MCF 10A (cell line): ENCODE measurements at regions of chr1 and their contacts with region 1.

Region 1: GRCh38 chr1:246450611-246451251 is 56.3 kb downstream of the SMYD3 start:
- DNase-seq: peak; percentile 61
- H3K4me3 Mint-ChIP-seq: no peak overlapping the region
- H3K27ac Mint-ChIP-seq: no peak overlapping the region
- H3K4me1 Mint-ChIP-seq: no peaks in the 10 kb centered on the region
- H3K27me3 Mint-ChIP-seq: no peaks in the 10 kb centered on the region
- CTCF ChIP-seq: peak; percentile 98

Region 2: GRCh38 chr1:245079021-245079609 is 1371.6 kb before region 1 on chr1:
- CTCF ChIA-PET with region 1: interaction called, 4 read pairs
- POLR2A ChIA-PET with region 1: interaction called, 3 read pairs
- intact Hi-C with region 1: loop called (anchors 5 kb)
- DNase-seq: peak; percentile 73
- H3K4me3 Mint-ChIP-seq: no peak overlapping the region
- H3K27ac Mint-ChIP-seq: no peak overlapping the region
- H3K4me1 Mint-ChIP-seq: peaks cover 4% of the 10 kb centered on the region
- H3K27me3 Mint-ChIP-seq: no peaks in the 10 kb centered on the region
- CTCF ChIP-seq: peak; percentile 97

Region 3: DNA sequence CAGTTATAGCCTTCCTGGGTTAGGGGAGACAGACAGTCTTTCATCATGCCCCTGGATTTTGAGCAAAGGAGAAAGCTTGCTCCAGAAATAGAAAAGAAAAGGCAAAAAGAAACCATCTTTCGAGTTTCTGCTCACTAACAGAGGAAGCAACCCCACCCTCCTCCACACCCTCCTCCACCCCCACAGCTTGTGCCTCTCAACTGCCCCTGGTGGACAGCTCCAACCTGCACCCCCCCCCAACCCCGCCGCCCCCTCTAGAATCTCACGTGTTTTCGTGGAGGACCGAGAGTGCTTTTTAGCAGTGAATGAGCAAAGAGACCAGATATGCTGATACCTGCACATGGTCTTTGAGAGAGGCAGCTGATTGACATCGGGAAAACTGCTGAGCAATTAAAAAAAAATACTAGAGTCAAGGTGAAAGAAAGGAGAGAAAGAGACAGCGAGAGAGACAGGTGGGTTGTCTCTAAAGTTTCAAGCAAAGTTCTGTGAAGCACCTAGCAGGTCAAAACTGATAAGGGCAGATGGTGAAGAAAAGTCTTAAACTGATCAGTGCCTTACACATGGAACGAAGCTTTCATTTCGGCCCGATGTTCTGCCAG is 937.7 kb before region 1 on chr1:
- CTCF ChIA-PET with region 1: no interaction called
- POLR2A ChIA-PET with region 1: no interaction called
- intact Hi-C with region 1: loop called (anchors 5 kb)
- DNase-seq: no peak
- H3K4me3 Mint-ChIP-seq: no peak overlapping the region
- H3K27ac Mint-ChIP-seq: no peak overlapping the region
- H3K4me1 Mint-ChIP-seq: peaks cover 9% of the 10 kb centered on the region
- H3K27me3 Mint-ChIP-seq: peaks cover 67% of the 10 kb centered on the region
- CTCF ChIP-seq: peak; percentile 6

Region 4: GRCh38 chr1:246012341-246012740 is 438.4 kb before region 1 on chr1:
- CTCF ChIA-PET with region 1: interaction called, 36 read pairs
- POLR2A ChIA-PET with region 1: no interaction called
- intact Hi-C with region 1: loop called (anchors 1 kb)
- DNase-seq: peak; percentile 71
- H3K4me3 Mint-ChIP-seq: no peak overlapping the region
- H3K27ac Mint-ChIP-seq: no peak overlapping the region
- H3K4me1 Mint-ChIP-seq: no peaks in the 10 kb centered on the region
- H3K27me3 Mint-ChIP-seq: no peaks in the 10 kb centered on the region
- CTCF ChIP-seq: peak; percentile 81

Region 5: GRCh38 chr1:246295968-246296367 is 154.8 kb before region 1 on chr1:
- CTCF ChIA-PET with region 1: interaction called, 9 read pairs
- POLR2A ChIA-PET with region 1: no interaction called
- intact Hi-C with region 1: loop called (anchors 5 kb)
- DNase-seq: no peak
- H3K4me3 Mint-ChIP-seq: no peak overlapping the region
- H3K27ac Mint-ChIP-seq: no peak overlapping the region
- H3K4me1 Mint-ChIP-seq: peaks cover 16% of the 10 kb centered on the region
- H3K27me3 Mint-ChIP-seq: no peaks in the 10 kb centered on the region
- CTCF ChIP-seq: no peak

Region 6: DNA sequence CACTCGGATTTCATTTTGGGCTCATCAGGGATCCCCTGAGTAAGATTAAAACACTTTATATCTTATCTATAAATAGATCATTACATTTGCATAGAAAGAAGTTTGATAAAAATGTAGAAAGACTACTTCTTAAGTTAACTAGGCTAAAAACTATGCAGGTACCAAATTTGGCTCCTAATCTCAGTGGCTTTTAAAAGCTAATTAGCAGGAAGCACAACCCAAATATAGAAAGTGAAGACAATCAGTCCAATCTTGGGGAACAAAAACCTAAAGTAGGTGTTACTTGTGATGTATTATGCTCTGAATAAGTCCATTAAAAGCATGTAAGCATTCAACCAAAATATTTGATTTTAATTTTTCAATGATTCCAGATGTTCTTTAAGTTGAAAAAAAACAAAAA is 21.0 kb after region 1 on chr1:
- CTCF ChIA-PET with region 1: interaction called, 79 read pairs
- POLR2A ChIA-PET with region 1: interaction called, 3 read pairs
- intact Hi-C with region 1: no loop called
- DNase-seq: no peak
- H3K4me3 Mint-ChIP-seq: no peak overlapping the region
- H3K27ac Mint-ChIP-seq: no peak overlapping the region
- H3K4me1 Mint-ChIP-seq: peaks cover under 1% of the 10 kb centered on the region
- H3K27me3 Mint-ChIP-seq: no peaks in the 10 kb centered on the region
- CTCF ChIP-seq: no peak